ENCODE measurements at regions of chrX and their contacts with region 1.

Region 1: DNA sequence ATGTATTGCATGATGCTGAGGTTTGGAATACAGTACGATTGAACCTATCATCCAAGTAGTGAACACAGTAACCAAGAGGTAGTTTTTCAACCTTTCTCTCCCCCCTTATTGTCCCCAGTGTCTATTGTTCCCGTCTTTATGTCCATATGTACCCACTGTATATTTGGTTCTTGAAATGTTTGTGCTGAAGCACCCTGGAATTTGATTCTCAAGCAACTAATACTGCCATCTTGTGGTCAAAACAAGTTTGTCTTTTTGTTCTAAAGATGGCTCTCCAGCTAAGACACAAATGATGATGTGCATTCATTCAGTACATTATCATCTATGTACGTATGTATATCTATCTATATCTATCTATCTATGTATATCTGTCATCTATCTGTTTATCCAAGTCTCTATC is 33.5 kb upstream of the DCX start:
- DNase-seq: no peak
- H3K4me3 ChIP-seq: peak overlapping the region in 1 of 59 donors; percentile 30
- H3K27ac ChIP-seq: no peak overlapping the region
- H3K27me3 ChIP-seq: peaks cover 0 to 88% (median 33%) of the 10 kb centered on the region in 45 donors
- CTCF ChIP-seq: peak; percentile 32 to 85 (median 69)

Region 2: GRCh38 chrX:111168314-111168713 is 277.2 kb before region 1 on chrX:
- intact Hi-C with region 1: loop called (anchors 5 to 10 kb)
- DNase-seq: peak in 1 of 10 donors; percentile 24
- H3K4me3 ChIP-seq: no peak overlapping the region
- H3K27ac ChIP-seq: no peak overlapping the region
- H3K27me3 ChIP-seq: peaks cover 0 to 85% (median 18%) of the 10 kb centered on the region in 45 donors
- CTCF ChIP-seq: peak in 44 of 56 donors; percentile 10 to 63 (median 32)

Region 3: DNA sequence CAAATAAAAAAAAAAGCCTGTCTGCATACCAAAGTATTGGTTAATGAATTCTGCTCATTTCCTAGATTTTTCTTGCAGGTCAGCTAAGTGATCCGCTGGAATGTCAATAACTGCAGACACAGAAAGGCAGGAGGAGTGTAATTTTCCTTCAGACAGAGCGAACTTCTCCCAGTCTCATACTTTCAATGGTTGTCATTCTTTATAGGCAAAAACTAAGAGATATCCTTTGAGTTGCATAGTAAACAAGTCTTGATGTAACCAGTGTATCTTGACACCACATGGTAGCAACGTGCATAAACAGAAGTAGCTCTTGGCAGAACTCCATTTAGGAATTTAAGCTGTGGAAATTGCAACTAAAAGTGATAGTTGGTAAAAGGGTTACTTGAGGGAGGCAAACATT is 183.4 kb before region 1 on chrX:
- intact Hi-C with region 1: loop called in 1 of 2 experiments (anchors 10 kb)
- DNase-seq: no peak
- H3K4me3 ChIP-seq: no peak overlapping the region
- H3K27ac ChIP-seq: no peak overlapping the region
- H3K27me3 ChIP-seq: peaks cover 0 to 93% (median 37%) of the 10 kb centered on the region in 45 donors
- CTCF ChIP-seq: no peak

Measured in dorsolateral prefrontal cortex (tissue), 120 donors.